ENCODE measurements at regions of chr11 and their contacts with region 1.

Region 1: DNA sequence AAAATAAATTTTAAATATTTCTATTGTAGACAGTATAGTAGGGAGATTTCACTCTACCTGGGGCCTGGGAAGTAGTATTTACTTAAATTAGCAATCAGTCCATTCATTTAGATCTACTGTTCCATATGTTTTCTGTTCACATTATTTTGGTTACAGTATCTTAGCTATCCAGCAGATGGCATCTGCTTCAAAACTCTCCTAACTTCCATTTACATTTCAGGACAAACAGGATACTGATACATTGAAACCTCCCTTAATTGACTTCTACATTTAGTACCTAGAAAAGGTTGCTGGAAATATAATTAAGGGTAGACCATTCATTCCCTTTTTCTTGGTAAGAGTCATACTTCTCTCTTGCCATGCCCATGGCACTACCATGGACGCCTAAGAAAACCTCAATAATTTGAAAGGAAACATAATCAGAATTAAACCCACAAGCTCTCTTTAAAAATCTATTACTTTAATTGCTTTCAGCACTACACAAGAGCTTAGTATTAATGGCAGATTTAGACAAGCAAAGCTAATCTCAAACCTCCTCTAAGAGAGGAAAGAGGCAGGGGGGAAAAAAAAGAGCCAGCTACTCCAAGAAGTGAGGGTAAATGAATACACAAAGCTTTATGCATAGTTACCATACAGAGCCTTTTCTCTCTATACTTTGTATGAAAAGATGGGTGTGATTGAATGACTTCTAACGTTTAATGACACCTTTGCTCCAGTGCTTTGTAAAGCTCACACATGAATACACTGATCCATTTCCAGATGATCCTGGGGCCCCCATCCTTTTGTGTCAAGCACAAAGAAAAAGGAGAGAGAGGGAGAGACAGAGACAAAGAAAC is 131.2 kb upstream of the MTMR2 start:
- DNase-seq: peak; percentile 51
- ATAC-seq: peak; percentile 41
- H3K4me3 ChIP-seq: no peak overlapping the region
- H3K4me3 Mint-ChIP-seq: no peak overlapping the region
- H3K27ac ChIP-seq: no peak overlapping the region
- H3K27ac Mint-ChIP-seq: no peak overlapping the region
- H3K4me1 ChIP-seq: peaks cover 5 to 9% of the 10 kb centered on the region in 2 donors
- H3K4me1 Mint-ChIP-seq: peaks cover 20% of the 10 kb centered on the region
- H3K27me3 ChIP-seq: no peaks in the 10 kb centered on the region
- H3K27me3 Mint-ChIP-seq: no peaks in the 10 kb centered on the region
- CTCF ChIP-seq: peak; percentile 70

Region 2: GRCh38 chr11:95937358-95937757 is 117.7 kb before region 1 on chr11:
- CTCF ChIA-PET with region 1: no interaction called
- POLR2A ChIA-PET with region 1: no interaction called
- intact Hi-C with region 1: no loop called
- DNase-seq: no peak
- ATAC-seq: no peak
- H3K4me3 ChIP-seq: no peak overlapping the region
- H3K4me3 Mint-ChIP-seq: no peak overlapping the region
- H3K27ac ChIP-seq: no peak overlapping the region
- H3K27ac Mint-ChIP-seq: no peak overlapping the region
- H3K4me1 ChIP-seq: no peaks in the 10 kb centered on the region
- H3K4me1 Mint-ChIP-seq: no peaks in the 10 kb centered on the region
- H3K27me3 ChIP-seq: no peaks in the 10 kb centered on the region
- H3K27me3 Mint-ChIP-seq: no peaks in the 10 kb centered on the region
- CTCF ChIP-seq: no peak

Region 3: DNA sequence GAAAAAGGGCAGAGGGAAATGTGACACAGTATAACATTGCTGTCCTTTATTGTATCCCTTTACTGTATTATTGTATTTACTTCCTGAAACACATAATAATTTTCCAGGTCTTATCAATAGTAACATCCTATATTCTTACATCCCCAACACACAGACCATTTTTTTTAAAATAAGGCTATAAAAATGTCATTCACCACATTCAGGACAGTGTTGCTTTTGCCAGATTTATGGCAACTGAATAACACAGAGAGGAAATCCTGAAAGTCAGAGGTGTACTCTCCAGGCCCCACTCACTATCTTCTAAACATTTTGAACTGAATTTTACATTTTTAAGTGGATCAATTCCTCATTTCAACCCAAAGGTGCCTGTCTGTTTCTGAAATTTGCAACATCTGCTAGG is 26.3 kb before region 1 on chr11:
- CTCF ChIA-PET with region 1: no interaction called
- POLR2A ChIA-PET with region 1: no interaction called
- intact Hi-C with region 1: no loop called
- DNase-seq: no peak
- ATAC-seq: no peak
- H3K4me3 ChIP-seq: no peak overlapping the region
- H3K4me3 Mint-ChIP-seq: no peak overlapping the region
- H3K27ac ChIP-seq: no peak overlapping the region
- H3K27ac Mint-ChIP-seq: no peak overlapping the region
- H3K4me1 ChIP-seq: no peaks in the 10 kb centered on the region
- H3K4me1 Mint-ChIP-seq: peaks cover 11% of the 10 kb centered on the region
- H3K27me3 ChIP-seq: no peaks in the 10 kb centered on the region
- H3K27me3 Mint-ChIP-seq: no peaks in the 10 kb centered on the region
- CTCF ChIP-seq: no peak

Region 4: DNA sequence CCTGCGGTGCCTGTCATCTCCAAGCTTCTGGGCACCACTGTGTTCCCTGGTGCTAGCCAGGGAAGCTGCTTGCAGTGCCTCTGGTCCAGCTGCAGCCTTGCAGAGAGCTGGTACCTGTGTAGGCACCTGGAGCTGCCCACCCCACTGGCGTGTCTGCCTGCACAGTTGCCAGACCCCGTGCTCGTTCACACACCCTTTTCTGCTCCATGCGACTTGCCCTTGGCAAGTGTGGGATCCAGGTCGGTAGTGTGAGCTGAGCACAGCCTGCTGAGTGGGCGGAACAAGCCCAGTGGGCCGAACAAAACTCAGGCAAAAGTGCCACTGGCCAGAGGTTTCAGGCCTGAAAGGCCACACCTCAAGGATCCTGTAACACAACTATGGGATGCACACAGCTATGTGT is 15.4 kb after region 1 on chr11:
- CTCF ChIA-PET with region 1: interaction called, 12 read pairs
- POLR2A ChIA-PET with region 1: no interaction called
- intact Hi-C with region 1: no loop called
- DNase-seq: no peak
- ATAC-seq: no peak
- H3K4me3 ChIP-seq: no peak overlapping the region
- H3K4me3 Mint-ChIP-seq: no peak overlapping the region
- H3K27ac ChIP-seq: no peak overlapping the region
- H3K27ac Mint-ChIP-seq: no peak overlapping the region
- H3K4me1 ChIP-seq: peaks cover 16% of the 10 kb centered on the region in 2 donors
- H3K4me1 Mint-ChIP-seq: peaks cover 31% of the 10 kb centered on the region
- H3K27me3 ChIP-seq: no peaks in the 10 kb centered on the region
- H3K27me3 Mint-ChIP-seq: no peaks in the 10 kb centered on the region
- CTCF ChIP-seq: no peak

Region 5: GRCh38 chr11:96075532-96075959 is 20.5 kb after region 1 on chr11:
- CTCF ChIA-PET with region 1: interaction called, 11 read pairs
- POLR2A ChIA-PET with region 1: no interaction called
- intact Hi-C with region 1: no loop called
- DNase-seq: peak; percentile 53
- ATAC-seq: peak; percentile 62
- H3K4me3 ChIP-seq: no peak overlapping the region
- H3K4me3 Mint-ChIP-seq: peak overlapping the region; percentile 32
- H3K27ac ChIP-seq: peak overlapping the region in 1 of 2 donors; percentile 53
- H3K27ac Mint-ChIP-seq: peak overlapping the region; percentile 43
- H3K4me1 ChIP-seq: peaks cover 29 to 30% of the 10 kb centered on the region in 2 donors
- H3K4me1 Mint-ChIP-seq: peaks cover 42% of the 10 kb centered on the region
- H3K27me3 ChIP-seq: no peaks in the 10 kb centered on the region
- H3K27me3 Mint-ChIP-seq: no peaks in the 10 kb centered on the region
- CTCF ChIP-seq: no peak

Region 6: GRCh38 chr11:96235751-96236150 is 180.7 kb after region 1 on chr11:
- CTCF ChIA-PET with region 1: interaction called, 37 read pairs
- POLR2A ChIA-PET with region 1: no interaction called
- intact Hi-C with region 1: no loop called
- DNase-seq: no peak
- ATAC-seq: no peak
- H3K4me3 ChIP-seq: no peak overlapping the region
- H3K4me3 Mint-ChIP-seq: no peak overlapping the region
- H3K27ac ChIP-seq: no peak overlapping the region
- H3K27ac Mint-ChIP-seq: no peak overlapping the region
- H3K4me1 ChIP-seq: peaks cover 10 to 14% of the 10 kb centered on the region in 2 donors
- H3K4me1 Mint-ChIP-seq: peaks cover 22% of the 10 kb centered on the region
- H3K27me3 ChIP-seq: no peaks in the 10 kb centered on the region
- H3K27me3 Mint-ChIP-seq: no peaks in the 10 kb centered on the region
- CTCF ChIP-seq: no peak

Region 7: GRCh38 chr11:96242971-96243647 is 188.0 kb after region 1 on chr11:
- CTCF ChIA-PET with region 1: interaction called, 37 read pairs
- POLR2A ChIA-PET with region 1: interaction called, 3 read pairs
- intact Hi-C with region 1: loop called (anchors 1 kb)
- DNase-seq: peak; percentile 82
- ATAC-seq: peak; percentile 81
- H3K4me3 ChIP-seq: peak overlapping the region; percentile 50 to 77 (median 62)
- H3K4me3 Mint-ChIP-seq: peak overlapping the region; percentile 93
- H3K27ac ChIP-seq: peak overlapping the region; percentile 72 to 84
- H3K27ac Mint-ChIP-seq: peak overlapping the region; percentile 96
- H3K4me1 ChIP-seq: peaks cover 36 to 37% of the 10 kb centered on the region in 2 donors
- H3K4me1 Mint-ChIP-seq: peaks cover 49% of the 10 kb centered on the region
- H3K27me3 ChIP-seq: no peaks in the 10 kb centered on the region
- H3K27me3 Mint-ChIP-seq: no peaks in the 10 kb centered on the region
- CTCF ChIP-seq: no peak

Measured in B cell (primary cell).